Motor neuron (in vitro differentiated cells): ENCODE measurements at regions of chr5 and their contacts with region 1.

Region 1: DNA sequence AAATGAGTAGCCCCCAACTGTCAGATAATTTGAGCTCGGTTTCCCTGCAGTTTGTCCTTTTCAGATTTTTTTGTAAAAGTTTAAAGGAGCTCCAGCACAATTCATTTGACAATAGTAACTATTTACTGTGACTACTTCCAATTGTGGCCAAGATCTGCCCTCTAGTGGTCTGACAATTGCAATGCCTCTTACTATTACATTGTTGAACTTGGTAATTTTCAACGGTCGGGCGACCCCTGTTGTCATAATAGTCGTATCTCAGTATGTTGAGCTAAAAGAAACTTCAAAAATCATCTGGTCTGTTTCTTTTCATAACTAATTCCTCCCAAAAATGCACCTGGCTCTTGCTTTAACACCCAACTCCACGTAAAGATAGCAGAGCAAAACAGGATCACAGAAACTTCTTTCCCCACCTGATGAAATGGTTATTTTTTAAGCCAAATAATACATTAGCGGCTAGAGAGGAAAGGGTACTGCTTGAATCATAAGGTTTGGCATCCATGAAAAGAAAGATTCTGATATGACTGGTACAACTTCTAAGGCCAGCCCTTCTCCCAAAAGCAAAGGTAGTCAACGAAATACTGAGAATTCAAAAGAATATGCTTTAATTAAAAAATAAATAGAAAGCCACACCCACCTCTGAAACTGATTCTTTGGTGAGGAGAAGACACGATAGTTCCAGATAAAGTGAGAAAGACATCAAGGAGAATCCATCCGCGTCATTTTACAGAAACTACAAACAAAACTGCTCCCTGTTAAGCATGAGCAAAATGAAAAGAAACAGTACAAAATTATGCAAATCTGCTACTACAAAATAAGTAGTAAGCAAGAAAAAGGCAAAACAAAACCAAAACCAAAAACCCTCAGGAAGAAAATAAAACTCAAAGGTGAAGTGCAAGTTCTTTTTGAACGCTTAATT is 76.9 kb upstream of the HTR4 start:
- ATAC-seq: peak; percentile 77 to 91 (median 86)
- H3K4me3 ChIP-seq: no peak overlapping the region
- H3K27ac ChIP-seq: no peak overlapping the region
- H3K4me1 ChIP-seq: no peaks in the 10 kb centered on the region

Region 2: DNA sequence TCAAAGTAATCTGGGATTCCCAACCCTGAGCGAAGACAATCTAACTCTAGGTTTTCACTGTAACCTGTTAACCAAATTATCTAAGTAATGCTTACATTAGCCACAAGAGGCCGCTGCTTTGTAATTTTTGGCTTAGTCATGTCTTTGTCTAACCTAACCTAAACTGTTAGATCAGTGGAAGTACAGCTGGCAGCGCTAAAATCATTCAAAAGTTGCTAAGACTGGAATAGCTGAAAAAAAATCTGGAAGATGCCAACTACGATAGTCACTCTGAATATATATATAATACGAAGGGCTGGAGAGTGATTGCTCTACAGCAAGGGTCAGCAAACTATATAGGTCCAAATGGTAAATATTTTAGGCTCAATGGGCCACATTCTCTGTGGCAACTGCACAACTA is 287.2 kb before region 1 on chr5:
- in situ Hi-C with region 1: loop called in 4 of 9 experiments (anchors 10 to 25 kb)
- ATAC-seq: peak; percentile 55 to 84 (median 74)
- H3K4me3 ChIP-seq: no peak overlapping the region
- H3K27ac ChIP-seq: no peak overlapping the region
- H3K4me1 ChIP-seq: no peaks in the 10 kb centered on the region

Region 3: DNA sequence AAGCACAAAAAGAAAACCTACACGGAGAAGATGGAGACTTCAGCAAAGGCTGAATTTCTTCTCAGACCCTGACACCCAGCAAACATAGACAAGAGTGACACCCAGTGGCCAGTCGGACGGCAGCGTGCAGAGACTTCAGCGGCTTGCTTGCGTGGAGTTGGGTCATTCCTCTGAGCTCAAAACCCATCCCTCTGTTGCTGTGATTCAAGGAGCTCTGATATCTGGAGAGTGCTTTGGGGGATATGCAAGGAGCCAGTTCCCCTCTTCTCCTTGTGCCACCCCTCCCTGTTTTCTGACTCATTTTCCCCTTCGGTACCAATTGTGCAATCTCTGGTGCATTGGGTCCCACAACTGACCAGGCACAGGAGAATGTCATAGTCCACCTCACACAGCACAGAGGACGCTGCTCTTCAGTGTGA is 304.2 kb after region 1 on chr5:
- in situ Hi-C with region 1: loop called in 7 of 9 experiments (anchors 10 to 25 kb)
- ATAC-seq: peak; percentile 61 to 99 (median 81)
- H3K4me3 ChIP-seq: no peak overlapping the region
- H3K27ac ChIP-seq: no peak overlapping the region
- H3K4me1 ChIP-seq: no peaks in the 10 kb centered on the region

Region 4: GRCh38 chr5:149268928-149269557 is 537.8 kb after region 1 on chr5:
- in situ Hi-C with region 1: loop called in 6 of 9 experiments (anchors 25 kb)
- ATAC-seq: peak in 2 of 8 experiments; percentile 3
- H3K4me3 ChIP-seq: no peak overlapping the region
- H3K27ac ChIP-seq: no peak overlapping the region
- H3K4me1 ChIP-seq: peaks cover 5 to 6% of the 10 kb centered on the region in 2 donors